CD4-positive, alpha-beta T cell (primary cell): ENCODE measurements at regions of chr2 and their contacts with region 1.

Region 1: GRCh38 chr2:85584857-85585783 is 889 bp downstream of the VAMP5 start:
- DNase-seq: peak in 3 of 14 experiments; percentile 8 to 39 (median 38)
- ATAC-seq: peak; percentile 48
- H3K4me3 ChIP-seq: peak overlapping the region; percentile 77
- H3K4me3 Mint-ChIP-seq: peak overlapping the region; percentile 93
- H3K27ac ChIP-seq: peak overlapping the region; percentile 26 to 68
- H3K27ac Mint-ChIP-seq: peak overlapping the region; percentile 79
- H3K4me1 ChIP-seq: peaks cover 49% of the 10 kb centered on the region
- H3K4me1 Mint-ChIP-seq: peaks cover 57% of the 10 kb centered on the region
- H3K27me3 ChIP-seq: no peaks in the 10 kb centered on the region
- H3K27me3 Mint-ChIP-seq: no peaks in the 10 kb centered on the region
- CTCF ChIP-seq: no peak

Region 2: DNA sequence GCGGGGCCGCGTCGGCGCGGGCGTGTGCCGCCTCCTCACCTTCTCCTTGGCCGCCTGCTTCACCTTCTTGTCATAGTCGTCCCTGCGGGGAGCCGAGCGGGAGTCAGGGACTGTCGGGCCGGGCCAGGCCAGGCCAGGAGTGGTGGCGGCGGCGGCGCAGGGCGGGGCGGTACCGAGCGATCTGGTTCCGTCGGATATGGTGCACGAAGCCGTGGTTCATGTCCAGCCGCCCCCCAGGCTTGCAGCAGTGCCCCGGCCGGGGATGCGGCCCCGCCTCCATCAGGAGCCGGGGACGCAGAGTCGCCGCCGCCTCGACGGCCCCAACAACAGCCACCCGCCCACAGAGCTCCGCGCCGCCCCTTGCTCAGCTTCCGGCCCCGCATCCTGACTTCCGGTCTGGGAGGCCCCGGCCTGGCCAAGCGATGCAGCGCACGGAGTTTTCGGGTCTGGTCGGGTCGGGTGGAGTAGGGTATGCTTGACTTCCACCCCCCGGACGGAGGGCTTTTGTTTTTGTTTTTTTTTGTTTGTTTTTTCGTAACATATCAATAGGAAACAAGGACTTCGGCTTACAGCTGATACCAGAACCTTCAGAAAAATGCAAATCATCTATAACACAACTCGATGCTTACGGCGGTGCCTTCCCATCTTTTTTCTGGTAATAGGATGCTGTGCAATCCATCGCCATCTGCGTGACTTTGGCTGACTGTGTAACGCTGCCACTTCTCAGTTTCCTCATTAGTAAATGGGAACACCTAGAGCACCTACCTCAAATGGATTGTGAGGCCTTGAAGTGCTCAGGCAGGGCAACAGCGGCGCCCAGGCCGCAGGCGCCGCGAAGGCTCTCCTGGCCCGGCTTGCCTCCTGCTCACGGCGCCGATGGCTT is 26.8 kb after region 1 on chr2 and contains the start of gene C2orf68:
- CTCF ChIA-PET with region 1: no interaction called
- POLR2A ChIA-PET with region 1: interaction called, 10 read pairs
- intact Hi-C with region 1: no loop called
- DNase-seq: peak; percentile 59 to 88 (median 79)
- ATAC-seq: peak; percentile 52
- H3K4me3 ChIP-seq: peak within 1 kb of the TSS; percentile 58
- H3K4me3 Mint-ChIP-seq: peak within 1 kb of the TSS; percentile 95
- H3K27ac ChIP-seq: peak within 1 kb of the TSS; percentile 74 to 82
- H3K27ac Mint-ChIP-seq: peak within 1 kb of the TSS; percentile 86
- H3K4me1 ChIP-seq: peaks cover 40% of the 10 kb centered on the region
- H3K4me1 Mint-ChIP-seq: peaks cover 39% of the 10 kb centered on the region
- H3K27me3 ChIP-seq: no peaks in the 10 kb centered on the region
- H3K27me3 Mint-ChIP-seq: no peaks in the 10 kb centered on the region
- CTCF ChIP-seq: no peak
- total RNA-seq, gene C2orf68: 31.0 to 31.2 TPM